Heart right ventricle (tissue), 16 donors: ENCODE measurements at regions of chr4 and their contacts with region 1.

Region 1: DNA sequence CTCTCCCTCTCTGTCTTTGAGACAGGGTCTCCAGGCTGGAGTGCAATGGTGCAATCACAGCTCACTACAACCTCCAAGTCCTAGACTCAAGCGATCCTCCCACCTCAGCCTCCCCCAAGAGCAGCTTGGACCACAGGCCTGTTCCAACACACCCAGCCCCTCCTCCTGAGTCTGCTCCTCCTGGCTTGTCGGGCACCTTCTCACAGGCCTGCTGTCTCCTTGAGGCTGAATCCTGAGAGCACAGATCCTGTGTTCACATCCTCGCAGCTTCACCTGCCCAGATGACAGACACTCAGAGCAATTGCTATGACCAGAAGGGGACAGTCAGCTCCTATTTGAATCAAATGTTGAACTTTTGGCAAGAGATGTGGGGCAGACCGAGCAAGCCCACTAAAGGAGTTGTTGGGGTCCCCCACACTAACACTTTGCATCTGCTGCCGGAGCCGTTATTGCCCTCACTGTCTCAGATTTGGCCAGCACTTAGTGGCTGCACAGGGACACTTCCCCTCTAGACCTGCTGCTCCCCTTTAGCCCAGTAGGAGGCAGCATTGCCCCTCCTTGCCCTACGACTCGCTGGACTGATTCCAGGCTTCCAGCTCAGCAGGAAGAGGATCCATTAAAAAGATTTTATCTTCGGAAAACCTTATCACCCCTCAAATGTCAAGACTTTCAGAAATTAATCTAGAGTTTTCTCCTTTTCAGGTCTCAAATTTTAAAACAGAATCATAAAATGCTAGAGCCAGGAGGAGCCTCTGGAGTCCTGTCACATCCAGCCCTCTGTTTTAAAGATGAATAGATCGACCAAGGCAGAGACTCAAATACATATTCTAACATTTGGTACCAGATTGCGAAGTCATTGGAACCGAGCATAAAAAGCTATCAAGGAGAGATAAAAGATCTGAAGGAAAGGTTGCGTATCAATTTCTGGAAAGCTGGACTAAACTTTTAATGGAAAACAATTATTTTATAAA is 113.7 kb downstream of the USP46 start:
- DNase-seq: peak; percentile 71 to 75
- ATAC-seq: peak; percentile 76 to 91 (median 82)
- H3K4me3 ChIP-seq: peak overlapping the region in 2 of 10 donors; percentile 4 to 16
- H3K27ac ChIP-seq: peak overlapping the region in 6 of 10 donors; percentile 57 to 87 (median 74)
- H3K4me1 ChIP-seq: peaks cover 5 to 37% (median 17%) of the 10 kb centered on the region in 9 donors
- H3K27me3 ChIP-seq: no peaks in the 10 kb centered on the region
- CTCF ChIP-seq: peak; percentile 90 to 99 (median 93)

Region 2: GRCh38 chr4:52588097-52588782 is 42.9 kb after region 1 on chr4:
- intact Hi-C with region 1: loop called in 3 of 10 experiments (anchors 5 to 10 kb)
- DNase-seq: peak; percentile 24 to 51
- ATAC-seq: peak; percentile 23 to 70 (median 64)
- H3K4me3 ChIP-seq: no peak overlapping the region
- H3K27ac ChIP-seq: peak overlapping the region in 8 of 10 donors; percentile 31 to 90 (median 86)
- H3K4me1 ChIP-seq: peaks cover 0 to 44% (median 16%) of the 10 kb centered on the region in 9 donors
- H3K27me3 ChIP-seq: no peaks in the 10 kb centered on the region
- CTCF ChIP-seq: peak; percentile 24 to 67 (median 59)

Region 3: DNA sequence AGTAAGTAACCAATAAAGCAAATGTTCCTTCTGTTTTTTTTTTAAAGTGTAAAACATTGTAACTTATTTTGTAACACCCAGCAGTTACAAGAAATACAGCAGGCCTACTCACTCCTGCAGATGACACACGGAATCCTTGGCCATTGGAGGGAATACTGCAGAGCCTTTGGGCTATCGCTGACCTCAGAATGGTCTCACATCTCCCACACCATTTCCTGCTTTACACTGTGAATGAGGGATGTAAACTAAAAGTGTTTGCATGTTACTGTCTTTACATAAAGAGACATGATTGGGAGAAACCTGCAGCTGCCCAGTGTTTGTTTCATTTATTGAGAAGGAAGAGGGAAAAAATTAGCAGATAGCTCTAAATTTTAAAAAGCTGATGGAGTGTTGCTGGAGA is 49.6 kb after region 1 on chr4:
- intact Hi-C with region 1: loop called in 1 of 10 experiments (anchors 10 kb)
- DNase-seq: no peak
- ATAC-seq: no peak
- H3K4me3 ChIP-seq: no peak overlapping the region
- H3K27ac ChIP-seq: no peak overlapping the region
- H3K4me1 ChIP-seq: peaks cover 0 to 23% (median 0%) of the 10 kb centered on the region in 9 donors
- H3K27me3 ChIP-seq: no peaks in the 10 kb centered on the region
- CTCF ChIP-seq: no peak

Region 4: GRCh38 chr4:52659001-52659721 is 113.8 kb after region 1 on chr4 and contains the start of gene USP46:
- intact Hi-C with region 1: loop called in 6 of 10 experiments (anchors 2 to 5 kb)
- DNase-seq: peak; percentile 81 to 84
- ATAC-seq: peak; percentile 77 to 96 (median 92)
- H3K4me3 ChIP-seq: peak within 1 kb of the TSS; percentile 51 to 93 (median 85)
- H3K27ac ChIP-seq: peak within 1 kb of the TSS; percentile 95 to 100 (median 98)
- H3K4me1 ChIP-seq: peaks cover 0 to 71% (median 47%) of the 10 kb centered on the region in 9 donors
- H3K27me3 ChIP-seq: no peaks in the 10 kb centered on the region
- CTCF ChIP-seq: no peak
- total RNA-seq, gene USP46: 46.8 to 113 (median 74.8) TPM

Region 5: GRCh38 chr4:52712172-52712990 is 167.0 kb after region 1 on chr4:
- intact Hi-C with region 1: loop called in 3 of 10 experiments (anchors 5 to 10 kb)
- DNase-seq: peak; percentile 98 to 99
- ATAC-seq: peak; percentile 98 to 100 (median 99)
- H3K4me3 ChIP-seq: peak overlapping the region; percentile 77 to 97 (median 88)
- H3K27ac ChIP-seq: peak overlapping the region; percentile 91 to 100 (median 96)
- H3K4me1 ChIP-seq: peaks cover 0 to 41% (median 29%) of the 10 kb centered on the region in 9 donors
- H3K27me3 ChIP-seq: no peaks in the 10 kb centered on the region
- CTCF ChIP-seq: no peak

Region 6: GRCh38 chr4:52861879-52862616 is 316.7 kb after region 1 on chr4 and contains the start of gene RASL11B:
- intact Hi-C with region 1: loop called in 3 of 10 experiments (anchors 5 to 10 kb)
- DNase-seq: peak; percentile 82 to 89
- ATAC-seq: peak; percentile 97 to 99 (median 98)
- H3K4me3 ChIP-seq: peak within 1 kb of the TSS; percentile 45 to 90 (median 70)
- H3K27ac ChIP-seq: peak within 1 kb of the TSS; percentile 5 to 90 (median 74)
- H3K4me1 ChIP-seq: peaks cover 0 to 56% (median 34%) of the 10 kb centered on the region in 9 donors
- H3K27me3 ChIP-seq: peaks cover 0 to 31% (median 0%) of the 10 kb centered on the region in 7 donors
- CTCF ChIP-seq: peak in 7 of 9 donors; percentile 20 to 56 (median 42)
- total RNA-seq, gene RASL11B: 1.2 to 16.5 (median 6.1) TPM

Region 7: GRCh38 chr4:52869196-52869595 is 323.8 kb after region 1 on chr4:
- intact Hi-C with region 1: loop called in 4 of 10 experiments (anchors 5 to 10 kb)
- DNase-seq: peak; percentile 73 to 76
- ATAC-seq: peak; percentile 44 to 78 (median 65)
- H3K4me3 ChIP-seq: no peak overlapping the region
- H3K27ac ChIP-seq: peak overlapping the region in 8 of 10 donors; percentile 13 to 86 (median 66)
- H3K4me1 ChIP-seq: peaks cover 10 to 77% (median 51%) of the 10 kb centered on the region in 9 donors
- H3K27me3 ChIP-seq: no peaks in the 10 kb centered on the region
- CTCF ChIP-seq: no peak